ENCODE measurements at regions of chrX and their contacts with region 1.

Region 1: DNA sequence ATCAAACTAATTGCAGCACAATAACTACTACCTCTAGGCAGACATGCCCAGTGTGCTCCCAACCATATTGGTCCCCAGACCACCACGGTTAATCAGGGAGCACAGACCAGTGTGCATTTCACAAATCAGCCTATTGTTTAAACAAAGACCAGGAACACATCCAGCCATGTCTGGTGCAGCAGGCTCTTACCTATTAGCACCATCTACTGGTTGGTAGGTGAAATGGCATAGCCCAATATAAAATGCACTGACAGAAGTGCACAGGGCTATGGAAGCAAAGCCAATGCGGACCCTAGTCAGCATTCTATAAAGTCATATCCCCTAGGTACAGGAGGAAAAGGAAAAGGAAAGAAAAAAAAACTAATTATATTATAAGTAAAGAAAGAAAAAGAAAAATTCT is 15.5 kb upstream of the CYLC1 start:
- DNase-seq: peak; percentile 58
- H3K4me3 Mint-ChIP-seq: no peak overlapping the region
- H3K27ac Mint-ChIP-seq: no peak overlapping the region
- H3K4me1 Mint-ChIP-seq: no peaks in the 10 kb centered on the region
- H3K27me3 Mint-ChIP-seq: no peaks in the 10 kb centered on the region
- CTCF ChIP-seq: peak; percentile 70

Region 2: DNA sequence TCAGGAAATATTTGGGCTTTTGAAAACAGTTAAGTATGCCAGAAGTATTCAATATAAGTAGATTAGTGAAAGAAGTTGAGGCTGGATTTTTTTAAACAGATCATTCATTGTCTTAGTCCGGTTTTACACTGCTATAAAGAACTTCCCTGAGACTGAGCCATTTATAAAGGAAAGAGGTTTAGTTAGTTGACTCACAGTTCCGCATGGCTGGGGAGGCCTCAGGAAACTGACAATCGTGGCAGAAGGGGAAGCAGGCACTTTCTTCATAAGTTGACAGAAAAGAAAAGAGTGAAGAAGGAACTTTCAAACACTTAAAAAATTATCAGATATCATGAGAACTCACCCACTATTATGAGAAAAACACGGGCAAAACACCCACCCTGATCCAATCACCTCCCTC is 15.5 kb before region 1 on chrX:
- CTCF ChIA-PET with region 1: interaction called, 27 read pairs
- POLR2A ChIA-PET with region 1: no interaction called
- intact Hi-C with region 1: no loop called
- DNase-seq: no peak
- H3K4me3 Mint-ChIP-seq: no peak overlapping the region
- H3K27ac Mint-ChIP-seq: no peak overlapping the region
- H3K4me1 Mint-ChIP-seq: no peaks in the 10 kb centered on the region
- H3K27me3 Mint-ChIP-seq: no peaks in the 10 kb centered on the region
- CTCF ChIP-seq: no peak

Measured in MCF 10A (cell line).